Right ventricle myocardium inferior (tissue), 1 donor: ENCODE measurements at regions of chr9 and their contacts with region 1.

Region 1: GRCh38 chr9:84697509-84698114 is 28.1 kb downstream of the NTRK2 start:
- DNase-seq: peak; percentile 74
- ATAC-seq: peak; percentile 79

Region 2: GRCh38 chr9:84851935-84852585 is 154.4 kb after region 1 on chr9:
- intact Hi-C with region 1: loop called (anchors 10 kb)
- DNase-seq: no peak
- ATAC-seq: peak; percentile 44

Region 3: GRCh38 chr9:84953797-84954705 is 256.4 kb after region 1 on chr9:
- intact Hi-C with region 1: loop called (anchors 2 kb)
- DNase-seq: peak; percentile 88
- ATAC-seq: peak; percentile 92

Region 4: GRCh38 chr9:85258823-85259370 is 561.3 kb after region 1 on chr9:
- intact Hi-C with region 1: loop called (anchors 2 kb)
- DNase-seq: peak; percentile 67
- ATAC-seq: peak; percentile 70